ENCODE measurements at regions of chr18 and their contacts with region 1.

Region 1: GRCh38 chr18:2692508-2692907 is 37.0 kb downstream of the SMCHD1 start:
- DNase-seq: no peak
- ATAC-seq: no peak
- H3K4me3 ChIP-seq: no peak overlapping the region
- H3K4me3 Mint-ChIP-seq: no peak overlapping the region
- H3K27ac ChIP-seq: no peak overlapping the region
- H3K27ac Mint-ChIP-seq: peak overlapping the region; percentile 1
- H3K4me1 ChIP-seq: peaks cover 14% of the 10 kb centered on the region
- H3K4me1 Mint-ChIP-seq: peaks cover 49% of the 10 kb centered on the region
- H3K27me3 ChIP-seq: no peaks in the 10 kb centered on the region
- H3K27me3 Mint-ChIP-seq: no peaks in the 10 kb centered on the region
- CTCF ChIP-seq: no peak

Region 2: GRCh38 chr18:2729757-2730156 is 37.2 kb after region 1 on chr18:
- CTCF ChIA-PET with region 1: no interaction called
- POLR2A ChIA-PET with region 1: interaction called, 3 read pairs
- intact Hi-C with region 1: loop called (anchors 5 kb)
- DNase-seq: no peak
- ATAC-seq: no peak
- H3K4me3 ChIP-seq: no peak overlapping the region
- H3K4me3 Mint-ChIP-seq: no peak overlapping the region
- H3K27ac ChIP-seq: no peak overlapping the region
- H3K27ac Mint-ChIP-seq: no peak overlapping the region
- H3K4me1 ChIP-seq: no peaks in the 10 kb centered on the region
- H3K4me1 Mint-ChIP-seq: peaks cover 14% of the 10 kb centered on the region
- H3K27me3 ChIP-seq: no peaks in the 10 kb centered on the region
- H3K27me3 Mint-ChIP-seq: no peaks in the 10 kb centered on the region
- CTCF ChIP-seq: no peak

Measured in CD4-positive, alpha-beta T cell (primary cell).